Activated CD4-positive, alpha-beta memory T cell treated with anti-CD3 and anti-CD28 coated beads for 36 hours (primary cell): ENCODE measurements at regions of chr15 and their contacts with region 1.

Region 1: DNA sequence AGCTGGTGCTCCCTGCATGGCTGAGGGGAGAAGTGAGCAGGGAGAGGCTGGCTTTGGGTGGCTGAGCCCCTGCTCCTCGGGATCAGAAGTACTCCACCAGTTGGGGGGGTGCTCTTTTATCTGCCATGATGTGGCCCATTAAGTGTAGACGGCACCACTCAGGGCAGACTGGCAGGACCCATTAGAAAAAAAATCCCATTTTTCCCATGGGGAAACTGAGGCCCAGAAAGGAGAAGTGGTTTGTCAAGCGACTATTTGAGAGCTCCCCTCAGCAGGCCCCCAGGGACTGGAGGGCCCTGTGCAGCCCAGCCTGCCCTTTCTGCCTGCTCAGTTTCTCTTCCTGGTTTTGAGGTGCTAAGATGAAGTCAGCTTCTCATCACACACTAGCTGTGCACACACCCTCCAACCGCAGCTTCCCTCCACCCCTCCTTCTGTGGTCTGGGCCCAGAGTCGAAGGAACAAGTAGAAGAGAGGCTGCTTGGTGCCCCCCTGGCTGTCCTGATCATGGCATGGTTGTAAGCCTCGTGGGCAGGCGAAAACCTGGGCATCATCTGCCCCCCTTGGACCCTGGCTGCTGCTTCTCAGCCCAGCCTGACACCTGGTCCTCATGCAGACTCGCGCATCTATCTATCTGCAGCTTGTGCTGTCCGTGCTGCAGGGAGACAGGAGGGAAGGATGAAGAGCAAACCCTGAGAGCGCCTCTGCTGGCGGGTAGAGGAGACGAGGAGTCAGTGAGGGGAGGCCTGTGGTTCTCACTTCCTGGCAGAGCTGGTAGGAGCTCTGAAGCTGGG is 5.6 kb downstream of the CSK start:
- DNase-seq: peak; percentile 97
- H3K4me3 Mint-ChIP-seq: peak overlapping the region; percentile 90
- H3K27ac Mint-ChIP-seq: peak overlapping the region; percentile 99
- H3K4me1 Mint-ChIP-seq: peaks cover 53% of the 10 kb centered on the region
- H3K27me3 Mint-ChIP-seq: no peaks in the 10 kb centered on the region

Region 2: DNA sequence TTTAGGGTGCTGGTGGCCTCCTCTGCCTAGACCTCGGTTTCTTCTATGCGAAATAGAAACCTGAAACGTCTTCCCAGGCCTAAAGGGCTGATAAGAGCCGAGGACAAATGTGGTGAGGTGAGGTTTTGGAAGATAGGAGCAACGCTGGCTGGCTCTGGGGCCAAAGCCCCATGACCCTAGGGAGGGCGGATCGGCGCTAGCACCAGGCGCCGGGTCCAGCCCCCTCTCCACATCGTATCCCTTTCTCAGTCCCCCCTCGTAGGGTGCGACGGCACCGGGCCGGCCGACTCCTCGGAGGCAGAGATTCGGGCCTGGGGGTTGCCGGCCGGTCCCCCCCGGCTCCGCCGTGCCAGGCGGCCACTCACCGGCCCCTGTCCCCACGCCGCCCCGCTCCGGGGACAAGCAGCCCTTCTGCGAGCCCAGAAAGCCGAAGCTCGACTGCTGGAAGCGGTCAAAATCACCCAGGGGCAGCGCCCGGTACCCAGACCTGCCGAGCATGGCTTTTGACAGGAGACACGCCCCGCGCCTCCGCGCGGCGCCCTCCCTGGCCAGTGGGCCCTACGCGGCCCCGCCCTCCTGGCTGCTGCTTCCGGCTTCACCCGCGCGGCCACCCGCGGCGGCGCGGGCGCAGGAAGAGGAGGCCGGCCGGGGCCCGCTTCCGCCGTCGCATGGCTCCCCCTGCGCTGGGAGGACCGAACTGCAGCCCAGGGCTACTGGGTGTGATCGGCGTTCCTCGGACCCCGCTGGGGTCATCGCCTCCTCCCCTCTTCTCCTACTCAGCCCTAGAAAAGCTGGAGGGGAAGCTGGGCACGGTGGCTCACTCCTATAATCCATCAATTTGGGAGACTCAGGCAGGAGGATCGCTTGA is 795.5 kb before region 1 on chr15 and contains the start of gene STOML1:
- CTCF ChIA-PET with region 1: no interaction called
- POLR2A ChIA-PET with region 1: no interaction called
- intact Hi-C with region 1: loop called (anchors 10 kb)
- DNase-seq: peak; percentile 97
- H3K4me3 Mint-ChIP-seq: peak within 1 kb of the TSS; percentile 80
- H3K27ac Mint-ChIP-seq: peak within 1 kb of the TSS; percentile 70
- H3K4me1 Mint-ChIP-seq: peaks cover 30% of the 10 kb centered on the region
- H3K27me3 Mint-ChIP-seq: no peaks in the 10 kb centered on the region
- total RNA-seq, gene STOML1: 7.1 to 10.1 TPM

Region 3: DNA sequence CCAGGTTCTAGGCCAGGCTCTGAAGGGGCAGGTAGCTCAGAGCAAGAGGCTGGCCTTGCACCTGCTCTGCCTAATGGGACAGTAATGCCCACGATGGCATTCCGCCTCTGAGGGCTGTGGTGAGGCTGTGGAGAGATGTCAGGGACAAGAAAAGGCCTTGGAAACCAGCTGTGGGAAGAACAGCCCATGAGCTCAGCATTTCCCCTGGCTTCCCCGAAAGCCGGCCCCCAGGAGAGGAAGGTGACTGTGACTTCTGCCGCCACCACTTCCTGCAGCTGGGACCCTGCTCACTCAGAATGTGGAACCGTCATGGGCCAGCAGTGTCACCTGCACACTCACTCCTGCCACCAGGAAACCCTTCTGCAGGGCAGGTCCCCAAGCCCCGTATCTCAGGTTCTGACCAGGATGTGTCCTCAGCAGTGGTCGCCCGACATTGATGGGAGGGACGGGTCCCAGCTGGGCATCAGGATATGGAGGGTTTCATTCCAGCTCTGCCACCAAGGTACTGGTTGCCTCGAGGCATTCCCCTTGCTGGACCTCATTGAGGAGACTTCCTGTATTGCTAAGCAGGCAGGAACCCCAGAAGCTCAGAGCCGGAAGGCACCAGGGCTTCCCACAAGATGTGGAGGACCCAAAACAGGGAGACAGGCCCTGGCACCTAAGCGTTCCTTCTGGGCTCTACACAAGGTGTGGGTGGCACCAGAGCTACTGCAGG is 384.4 kb before region 1 on chr15:
- CTCF ChIA-PET with region 1: no interaction called
- POLR2A ChIA-PET with region 1: no interaction called
- intact Hi-C with region 1: loop called (anchors 5 kb)
- DNase-seq: peak; percentile 95
- H3K4me3 Mint-ChIP-seq: peak overlapping the region; percentile 28
- H3K27ac Mint-ChIP-seq: peak overlapping the region; percentile 85
- H3K4me1 Mint-ChIP-seq: peaks cover 73% of the 10 kb centered on the region
- H3K27me3 Mint-ChIP-seq: no peaks in the 10 kb centered on the region

Region 4: GRCh38 chr15:74799856-74800547 is 12.6 kb after region 1 on chr15:
- CTCF ChIA-PET with region 1: interaction called, 1,220 read pairs
- POLR2A ChIA-PET with region 1: interaction called, 15 read pairs
- intact Hi-C with region 1: loop called (anchors 1 kb)
- DNase-seq: peak; percentile 93
- H3K4me3 Mint-ChIP-seq: no peak overlapping the region
- H3K27ac Mint-ChIP-seq: peak overlapping the region; percentile 91
- H3K4me1 Mint-ChIP-seq: peaks cover 49% of the 10 kb centered on the region
- H3K27me3 Mint-ChIP-seq: no peaks in the 10 kb centered on the region

Region 5: DNA sequence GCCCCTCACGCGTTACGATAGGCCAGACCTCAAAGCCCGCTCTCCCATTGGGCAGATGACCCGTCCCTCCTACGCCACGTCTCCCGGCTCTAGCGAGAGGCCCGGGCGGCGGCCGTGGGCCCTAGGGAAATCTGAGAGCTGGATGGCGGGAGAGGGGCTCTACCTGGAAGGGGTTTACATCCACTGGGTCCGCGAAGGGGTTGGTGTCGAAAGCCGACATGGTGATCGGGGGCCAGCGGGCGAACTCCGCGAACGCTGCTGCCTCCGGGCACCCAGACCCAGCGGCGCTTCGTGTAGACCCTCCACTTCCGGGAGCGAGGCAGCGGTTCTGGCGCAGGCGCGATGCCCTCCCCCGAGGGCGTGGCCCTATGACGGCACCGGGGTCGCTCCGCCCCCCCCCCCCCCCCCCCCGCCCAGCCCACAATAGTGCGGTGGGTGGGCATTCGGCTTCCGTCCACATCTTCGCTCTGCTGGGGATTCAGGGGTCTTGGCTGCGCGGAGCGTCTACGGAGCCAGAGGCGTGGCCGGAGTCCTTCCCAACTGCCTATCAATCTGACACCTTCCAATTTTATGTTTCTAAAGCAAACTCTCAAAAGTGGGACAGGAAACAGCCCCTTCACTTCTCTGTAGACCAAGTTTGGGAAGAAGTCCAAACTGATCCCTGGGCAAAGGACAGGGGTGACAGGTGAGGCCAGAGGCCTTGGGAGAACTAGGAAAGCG is 85.8 kb after region 1 on chr15 and contains the start of gene SCAMP2:
- CTCF ChIA-PET with region 1: interaction called, 11 read pairs
- POLR2A ChIA-PET with region 1: interaction called, 9 read pairs
- intact Hi-C with region 1: no loop called
- DNase-seq: peak; percentile 93
- H3K4me3 Mint-ChIP-seq: peak within 1 kb of the TSS; percentile 96
- H3K27ac Mint-ChIP-seq: peak within 1 kb of the TSS; percentile 90
- H3K4me1 Mint-ChIP-seq: peaks cover 45% of the 10 kb centered on the region
- H3K27me3 Mint-ChIP-seq: no peaks in the 10 kb centered on the region
- total RNA-seq, gene SCAMP2: 77.6 to 79.5 TPM

Region 6: DNA sequence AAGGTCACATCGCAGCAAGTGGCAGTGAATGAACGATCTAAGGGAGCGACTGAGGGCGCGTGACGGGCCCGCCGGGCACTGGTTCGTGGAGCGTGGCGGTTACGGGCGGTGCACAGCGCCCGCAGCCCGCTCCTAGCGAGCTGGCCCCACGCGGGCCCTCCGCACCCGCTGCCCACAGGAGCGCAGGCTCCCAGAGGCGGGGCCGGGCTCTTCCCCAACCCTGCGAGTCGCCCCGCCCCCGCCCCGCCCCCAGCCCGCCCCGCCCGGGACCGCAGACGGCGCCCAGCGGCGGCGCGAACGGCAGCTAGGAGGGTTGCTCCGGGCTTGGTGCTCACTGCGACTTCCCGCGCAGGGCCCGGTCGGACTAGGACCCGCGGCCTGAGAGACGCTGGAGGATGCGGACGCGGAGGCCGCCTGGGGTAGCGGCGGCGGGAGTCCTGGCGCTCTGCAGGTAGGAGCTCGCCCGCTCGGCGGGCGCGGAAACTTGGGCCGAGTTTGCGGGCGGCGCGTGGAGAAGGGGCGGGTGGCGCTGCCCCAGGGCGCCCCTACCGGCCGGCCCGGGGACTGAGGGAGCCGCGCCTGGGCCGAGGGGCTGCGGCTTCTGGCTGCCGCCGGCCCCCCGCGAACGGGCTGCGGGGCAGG is 414.3 kb after region 1 on chr15 and contains the start of gene C15orf39:
- CTCF ChIA-PET with region 1: no interaction called
- POLR2A ChIA-PET with region 1: no interaction called
- intact Hi-C with region 1: loop called (anchors 5 kb)
- DNase-seq: peak; percentile 80
- H3K4me3 Mint-ChIP-seq: peak within 1 kb of the TSS; percentile 89
- H3K27ac Mint-ChIP-seq: peak within 1 kb of the TSS; percentile 84
- H3K4me1 Mint-ChIP-seq: peaks cover 35% of the 10 kb centered on the region
- H3K27me3 Mint-ChIP-seq: no peaks in the 10 kb centered on the region
- total RNA-seq, gene C15orf39: 14.1 to 14.2 TPM